Activated naive CD4-positive, alpha-beta T cell treated with anti-CD3 and anti-CD28 coated beads, Interleukin-2, amount 10 ng/mL, durations not matched to agents 7 days and 5 days (primary cell): ENCODE measurements at regions of chr2 and their contacts with region 1.

Region 1: GRCh38 chr2:198296665-198297308 is 492.4 kb downstream of the PLCL1 start:
- DNase-seq: peak; percentile 65
- H3K4me3 Mint-ChIP-seq: no peak overlapping the region
- H3K27ac Mint-ChIP-seq: no peak overlapping the region
- H3K4me1 Mint-ChIP-seq: no peaks in the 10 kb centered on the region
- H3K27me3 Mint-ChIP-seq: peaks cover 24% of the 10 kb centered on the region

Region 2: DNA sequence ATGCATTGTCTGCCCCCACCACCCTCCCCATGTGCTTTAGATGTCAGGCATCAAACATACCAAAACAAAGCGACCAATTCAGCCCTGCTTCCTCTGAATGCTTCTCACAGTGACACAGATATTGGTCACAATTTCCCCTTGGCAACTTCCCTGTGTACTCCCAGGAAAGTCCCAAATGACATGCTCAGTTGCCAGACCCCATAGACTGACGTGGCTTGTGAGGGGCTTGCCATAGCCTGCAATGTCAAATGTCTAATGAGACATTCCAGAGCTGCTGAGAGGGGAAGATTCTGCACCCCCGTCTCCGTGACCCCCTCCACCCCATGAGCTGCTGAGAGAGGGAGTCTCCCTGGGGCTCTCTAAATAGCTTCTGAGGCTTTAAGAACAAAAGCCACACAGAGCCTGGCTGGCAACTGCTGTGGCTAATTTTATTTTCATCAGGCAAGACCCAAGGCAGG is 668.7 kb before region 1 on chr2:
- CTCF ChIA-PET with region 1: no interaction called
- DNase-seq: no peak
- H3K4me3 Mint-ChIP-seq: no peak overlapping the region
- H3K27ac Mint-ChIP-seq: no peak overlapping the region
- H3K4me1 Mint-ChIP-seq: no peaks in the 10 kb centered on the region
- H3K27me3 Mint-ChIP-seq: peaks cover 6% of the 10 kb centered on the region

Region 3: GRCh38 chr2:197804049-197804757 is 492.6 kb before region 1 on chr2 and contains the start of gene PLCL1:
- CTCF ChIA-PET with region 1: interaction called, 12 read pairs
- DNase-seq: peak; percentile 94
- H3K4me3 Mint-ChIP-seq: peak within 1 kb of the TSS; percentile 88
- H3K27ac Mint-ChIP-seq: peak within 1 kb of the TSS; percentile 85
- H3K4me1 Mint-ChIP-seq: peaks cover 41% of the 10 kb centered on the region
- H3K27me3 Mint-ChIP-seq: peaks cover 16% of the 10 kb centered on the region

Region 4: DNA sequence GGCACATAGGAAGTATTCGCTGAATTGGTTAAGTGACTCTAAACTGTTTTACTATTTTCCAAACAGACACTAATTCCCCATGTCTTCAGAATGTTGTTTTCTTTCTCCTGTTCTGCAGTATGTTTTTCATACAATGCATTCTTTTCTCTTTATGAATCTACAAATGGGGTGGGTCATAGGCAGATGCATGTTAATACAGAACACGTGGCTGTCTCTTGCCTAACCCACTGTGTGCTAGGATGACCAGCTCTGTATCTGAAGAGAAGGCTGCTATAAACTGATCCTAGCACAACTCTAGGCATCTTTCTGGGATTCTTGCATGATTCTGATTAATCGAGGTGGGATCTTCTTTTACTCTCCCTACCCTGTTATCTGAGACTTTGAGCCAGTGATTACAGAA is 333.6 kb after region 1 on chr2:
- CTCF ChIA-PET with region 1: no interaction called
- DNase-seq: no peak
- H3K4me3 Mint-ChIP-seq: no peak overlapping the region
- H3K27ac Mint-ChIP-seq: no peak overlapping the region
- H3K4me1 Mint-ChIP-seq: no peaks in the 10 kb centered on the region
- H3K27me3 Mint-ChIP-seq: no peaks in the 10 kb centered on the region

Region 5: DNA sequence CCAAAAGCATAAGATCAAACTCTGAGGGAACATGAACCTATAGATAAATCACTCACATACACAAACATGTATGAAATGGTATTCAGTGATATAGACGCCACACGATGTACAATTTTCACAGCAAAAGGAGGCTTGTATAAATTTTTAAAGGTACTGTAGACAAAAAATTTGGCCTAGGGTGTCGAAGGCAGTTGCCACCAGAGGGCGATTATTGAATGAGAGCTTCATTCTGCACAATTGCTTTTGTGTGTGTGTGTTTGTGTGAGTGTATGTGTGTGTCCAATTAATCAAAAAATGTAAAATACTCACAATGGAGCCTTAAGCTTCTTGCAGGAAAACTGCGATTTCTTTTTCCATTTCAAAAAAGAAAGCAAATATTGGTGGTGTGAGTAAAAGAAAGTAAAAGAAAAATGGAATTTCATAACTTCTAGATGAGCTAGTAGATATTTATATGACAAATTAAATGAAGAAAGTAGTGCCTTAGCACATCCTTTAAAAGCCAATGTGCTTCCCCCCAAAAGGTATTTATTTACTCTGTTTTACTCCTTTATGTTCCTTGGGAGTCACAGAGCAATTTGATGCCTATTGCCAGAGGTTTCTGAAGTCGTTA is 360.8 kb after region 1 on chr2:
- CTCF ChIA-PET with region 1: no interaction called
- DNase-seq: no peak
- H3K4me3 Mint-ChIP-seq: no peak overlapping the region
- H3K27ac Mint-ChIP-seq: no peak overlapping the region
- H3K4me1 Mint-ChIP-seq: no peaks in the 10 kb centered on the region
- H3K27me3 Mint-ChIP-seq: no peaks in the 10 kb centered on the region